Brain microvascular endothelial cell (primary cell): ENCODE measurements at regions of chr2 and their contacts with region 1.

Region 1: DNA sequence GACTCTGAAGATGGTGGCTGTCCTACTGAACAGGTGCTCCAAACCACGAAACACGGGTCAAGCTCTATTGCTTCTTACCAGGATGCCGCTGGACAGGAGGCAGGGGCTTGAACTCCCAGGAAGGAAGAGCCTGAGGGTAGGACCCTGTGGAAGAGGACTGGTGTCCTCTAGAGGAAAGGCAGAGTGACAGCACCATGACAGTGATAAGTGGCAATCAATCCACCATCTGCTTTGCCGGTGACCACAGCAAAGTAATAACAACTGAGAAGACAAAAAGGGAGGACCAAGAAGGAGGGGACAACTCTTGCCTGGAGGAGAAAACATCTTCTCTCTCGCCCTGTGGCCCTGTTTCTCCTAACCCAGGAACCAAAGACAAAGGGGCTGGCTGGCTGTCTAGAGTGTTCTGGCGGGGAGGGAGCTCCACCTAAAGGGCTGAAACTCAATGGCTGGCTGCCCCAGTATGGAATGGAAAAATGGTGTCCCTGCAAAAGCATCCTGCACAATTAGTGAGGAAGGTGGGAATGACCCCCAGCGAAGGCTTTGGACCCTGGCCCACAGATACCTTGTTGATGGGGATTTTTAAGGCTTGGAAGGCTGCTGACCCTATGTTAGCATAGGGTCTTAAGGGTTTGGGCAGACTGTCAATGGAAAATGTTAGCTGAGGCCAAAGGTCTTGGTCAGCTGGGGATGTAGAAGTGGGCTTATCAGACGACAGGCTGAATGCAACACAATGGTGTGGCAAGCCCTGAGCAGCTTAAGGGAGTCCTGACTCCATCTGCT is 35.4 kb downstream of the PROC start:
- DNase-seq: no peak
- H3K4me3 ChIP-seq: no peak overlapping the region
- H3K27ac ChIP-seq: no peak overlapping the region
- H3K27me3 ChIP-seq: no peaks in the 10 kb centered on the region
- CTCF ChIP-seq: peak; percentile 30

Region 2: GRCh38 chr2:127355386-127356008 is 98.1 kb before region 1 on chr2:
- in situ Hi-C with region 1: loop called (anchors 25 kb)
- DNase-seq: no peak
- H3K4me3 ChIP-seq: no peak overlapping the region
- H3K27ac ChIP-seq: no peak overlapping the region
- H3K27me3 ChIP-seq: no peaks in the 10 kb centered on the region
- CTCF ChIP-seq: peak; percentile 79

Region 3: GRCh38 chr2:127379712-127380355 is 73.7 kb before region 1 on chr2:
- in situ Hi-C with region 1: no loop called
- DNase-seq: no peak
- H3K4me3 ChIP-seq: no peak overlapping the region
- H3K27ac ChIP-seq: no peak overlapping the region
- H3K27me3 ChIP-seq: no peaks in the 10 kb centered on the region
- CTCF ChIP-seq: no peak

Region 4: DNA sequence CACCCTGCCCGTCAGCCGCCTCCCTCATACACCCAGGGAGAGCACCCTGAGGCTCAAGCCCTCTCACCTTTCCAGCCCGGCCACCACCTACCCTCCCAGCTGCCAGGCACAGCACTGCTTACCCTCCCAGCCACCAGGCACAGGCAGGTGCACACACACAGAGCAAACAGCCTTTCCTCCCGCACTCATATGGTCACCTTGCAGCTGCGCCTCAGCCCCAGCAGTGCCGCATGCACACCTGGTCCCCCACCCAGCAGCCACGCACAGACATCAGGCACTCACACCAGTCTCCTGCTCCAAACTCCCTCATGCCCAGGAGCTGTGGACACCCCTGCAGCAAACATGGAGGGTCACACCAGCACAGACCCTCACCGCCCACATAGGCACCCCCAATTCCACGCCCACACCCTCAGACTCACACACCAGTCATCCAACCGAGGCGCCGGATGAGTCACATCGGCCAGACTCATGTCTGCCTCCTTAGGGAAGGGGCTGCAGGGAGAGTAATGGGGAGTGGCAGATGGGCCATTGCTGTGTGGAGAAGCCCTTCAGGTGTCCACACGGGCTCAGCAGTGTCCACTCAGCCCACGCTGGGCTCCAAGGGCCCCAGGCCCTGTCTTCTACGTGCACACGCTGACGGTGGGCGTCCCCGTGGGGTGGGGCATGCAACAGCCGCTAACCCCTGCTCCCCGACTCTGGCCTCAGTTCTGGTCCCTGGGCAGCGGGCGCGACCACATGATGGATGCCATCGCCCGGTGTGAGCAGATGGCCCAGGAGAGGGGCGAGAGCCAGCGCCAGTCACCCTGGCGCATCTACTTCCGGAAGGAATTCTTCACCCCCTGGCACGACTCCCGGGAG is 170.0 kb after region 1 on chr2:
- in situ Hi-C with region 1: no loop called
- DNase-seq: peak; percentile 72
- H3K4me3 ChIP-seq: no peak overlapping the region
- H3K27ac ChIP-seq: no peak overlapping the region
- H3K27me3 ChIP-seq: no peaks in the 10 kb centered on the region
- CTCF ChIP-seq: no peak

Region 5: GRCh38 chr2:127721311-127721977 is 267.9 kb after region 1 on chr2:
- in situ Hi-C with region 1: no loop called
- DNase-seq: peak; percentile 40
- H3K4me3 ChIP-seq: no peak overlapping the region
- H3K27ac ChIP-seq: peak overlapping the region; percentile 76
- H3K27me3 ChIP-seq: no peaks in the 10 kb centered on the region
- CTCF ChIP-seq: no peak

Region 6: DNA sequence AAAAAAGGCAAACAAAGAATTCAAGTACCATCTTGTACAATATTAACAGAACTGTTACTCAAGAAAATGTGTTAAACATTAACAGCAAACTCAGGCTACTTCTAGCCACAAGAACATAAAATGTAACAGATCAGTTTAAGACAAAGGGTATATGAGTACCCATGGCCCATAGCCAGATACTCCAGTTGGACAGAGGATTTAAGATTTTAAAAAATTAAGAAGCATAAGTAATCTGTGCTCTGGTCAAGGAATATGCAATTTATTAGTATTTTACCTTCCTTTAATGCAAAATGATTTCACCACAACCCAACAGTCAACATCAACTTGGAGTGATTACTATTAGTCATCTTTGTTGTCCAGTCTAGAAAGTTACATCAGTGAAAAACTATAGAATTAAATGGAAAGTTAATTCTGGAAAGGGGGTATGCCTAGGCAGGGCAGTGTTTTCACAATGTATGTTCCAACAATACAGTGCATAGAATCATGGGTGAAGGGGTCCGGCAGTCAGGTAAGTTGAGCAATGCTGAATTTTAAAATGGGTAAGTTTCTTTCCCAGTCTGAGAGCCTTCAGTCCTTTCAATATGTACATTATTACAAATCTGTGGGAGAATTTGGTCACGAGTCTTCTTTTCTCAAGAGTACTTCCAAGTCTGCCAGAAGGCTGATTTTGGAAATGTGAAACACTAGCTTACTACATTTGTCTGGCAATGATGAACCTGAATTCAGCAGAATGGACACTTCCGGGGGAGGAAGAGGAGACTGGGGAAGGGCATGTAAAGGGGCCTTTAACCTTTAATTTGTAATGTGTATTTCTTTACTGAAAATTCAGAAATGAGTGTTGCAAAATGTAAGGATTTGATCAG is 282.2 kb after region 1 on chr2:
- in situ Hi-C with region 1: no loop called
- DNase-seq: no peak
- H3K4me3 ChIP-seq: no peak overlapping the region
- H3K27ac ChIP-seq: no peak overlapping the region
- H3K27me3 ChIP-seq: no peaks in the 10 kb centered on the region
- CTCF ChIP-seq: no peak